Astrocyte of the cerebellum (primary cell): ENCODE measurements at regions of chr12 and their contacts with region 1.

Region 1: GRCh38 chr12:6810758-6811157 is 10.9 kb upstream of the GPR162 start:
- DNase-seq: no peak
- H3K4me3 ChIP-seq: no peak overlapping the region
- CTCF ChIP-seq: no peak

Region 2: DNA sequence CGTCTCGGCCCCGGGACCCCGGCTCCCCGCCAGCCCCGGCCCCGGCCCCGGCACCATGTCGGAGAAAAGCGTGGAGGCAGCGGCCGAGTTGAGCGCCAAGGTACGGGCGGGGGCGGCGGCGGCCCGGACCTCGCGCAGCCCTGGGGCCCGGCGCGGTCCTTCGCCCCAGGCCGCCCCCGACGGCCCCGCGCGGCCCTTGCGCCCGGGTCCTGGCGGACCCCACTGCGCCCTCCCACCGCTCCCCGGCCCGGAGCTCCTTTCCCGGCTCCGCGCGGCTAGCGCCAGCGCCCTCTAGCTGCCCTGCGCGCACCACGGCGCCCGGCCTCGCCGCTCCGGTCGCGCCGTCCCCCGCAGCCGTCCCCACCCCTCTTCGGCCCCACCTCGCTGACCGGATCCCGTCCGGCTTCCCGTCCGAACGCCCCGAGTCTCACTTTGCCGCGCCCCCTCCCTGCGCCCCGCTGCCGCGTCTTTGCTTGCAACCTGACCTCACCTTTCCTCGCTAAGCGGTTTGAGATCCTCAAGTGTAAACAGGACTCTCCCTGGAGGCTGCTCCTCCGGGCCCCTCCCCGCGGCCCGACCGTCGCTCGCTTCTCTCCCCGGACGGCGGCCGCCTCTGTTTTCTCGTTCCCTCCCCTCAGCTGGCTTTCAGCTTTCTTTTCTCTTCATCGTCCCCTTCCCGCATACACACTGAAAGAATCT is 44.0 kb before region 1 on chr12:
- in situ Hi-C with region 1: loop called (anchors 5 kb)
- DNase-seq: no peak
- H3K4me3 ChIP-seq: peak overlapping the region; percentile 94
- CTCF ChIP-seq: peak; percentile 50